Caco-2 (cell line): ENCODE measurements at regions of chr5 and their contacts with region 1.

Region 1: DNA sequence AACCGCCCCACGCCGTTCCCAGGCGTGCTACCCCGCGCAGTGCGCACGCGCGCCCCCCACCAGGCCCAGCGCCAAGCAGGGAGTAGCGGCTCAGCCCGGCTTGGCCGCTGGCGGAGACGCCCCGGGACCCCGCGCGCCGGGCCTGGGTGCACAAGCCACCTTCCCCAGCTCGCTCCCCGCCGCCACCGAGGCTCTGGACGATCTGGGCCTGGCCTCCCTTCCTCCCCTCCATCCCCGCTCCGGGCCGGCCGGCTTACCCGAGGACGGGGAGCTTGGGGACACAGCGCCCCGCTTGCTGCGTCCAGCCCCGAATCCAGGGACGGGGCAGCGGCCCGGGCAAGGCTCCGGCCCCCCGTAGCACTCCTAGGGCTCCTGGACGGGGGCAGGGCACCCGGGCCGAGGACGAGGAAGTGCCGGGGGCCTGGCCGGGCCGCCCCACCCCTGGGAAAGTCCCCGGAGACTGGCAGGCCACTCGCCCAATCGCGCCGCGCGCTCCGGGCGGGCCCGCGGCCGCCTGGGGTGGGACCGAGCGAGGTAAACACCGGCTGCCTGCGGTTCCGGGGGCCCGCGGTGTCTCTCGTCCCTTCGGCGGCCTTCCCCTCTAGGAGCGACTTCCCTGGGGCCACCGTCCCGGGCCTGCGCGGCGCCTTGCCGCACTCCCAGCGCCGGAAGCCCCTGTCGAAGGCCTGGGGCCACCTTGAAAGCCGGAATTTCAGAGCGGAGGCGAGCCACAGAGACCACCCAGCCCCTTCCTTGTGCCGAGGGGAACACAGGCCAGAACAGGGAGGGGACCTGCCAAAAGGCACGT is at the start of gene TNIP1:
- DNase-seq: peak; percentile 93 to 97
- H3K4me3 ChIP-seq: peak within 1 kb of the TSS; percentile 62
- H3K4me3 Mint-ChIP-seq: peak within 1 kb of the TSS; percentile 74
- H3K27ac Mint-ChIP-seq: peak within 1 kb of the TSS; percentile 70
- H3K4me1 ChIP-seq: peaks cover 14% of the 10 kb centered on the region
- H3K4me1 Mint-ChIP-seq: peaks cover 41% of the 10 kb centered on the region
- H3K27me3 ChIP-seq: no peaks in the 10 kb centered on the region
- H3K27me3 Mint-ChIP-seq: no peaks in the 10 kb centered on the region
- CTCF ChIP-seq: no peak
- total RNA-seq, gene TNIP1: 62.7 and 65.7 TPM in 2 replicates

Region 2: DNA sequence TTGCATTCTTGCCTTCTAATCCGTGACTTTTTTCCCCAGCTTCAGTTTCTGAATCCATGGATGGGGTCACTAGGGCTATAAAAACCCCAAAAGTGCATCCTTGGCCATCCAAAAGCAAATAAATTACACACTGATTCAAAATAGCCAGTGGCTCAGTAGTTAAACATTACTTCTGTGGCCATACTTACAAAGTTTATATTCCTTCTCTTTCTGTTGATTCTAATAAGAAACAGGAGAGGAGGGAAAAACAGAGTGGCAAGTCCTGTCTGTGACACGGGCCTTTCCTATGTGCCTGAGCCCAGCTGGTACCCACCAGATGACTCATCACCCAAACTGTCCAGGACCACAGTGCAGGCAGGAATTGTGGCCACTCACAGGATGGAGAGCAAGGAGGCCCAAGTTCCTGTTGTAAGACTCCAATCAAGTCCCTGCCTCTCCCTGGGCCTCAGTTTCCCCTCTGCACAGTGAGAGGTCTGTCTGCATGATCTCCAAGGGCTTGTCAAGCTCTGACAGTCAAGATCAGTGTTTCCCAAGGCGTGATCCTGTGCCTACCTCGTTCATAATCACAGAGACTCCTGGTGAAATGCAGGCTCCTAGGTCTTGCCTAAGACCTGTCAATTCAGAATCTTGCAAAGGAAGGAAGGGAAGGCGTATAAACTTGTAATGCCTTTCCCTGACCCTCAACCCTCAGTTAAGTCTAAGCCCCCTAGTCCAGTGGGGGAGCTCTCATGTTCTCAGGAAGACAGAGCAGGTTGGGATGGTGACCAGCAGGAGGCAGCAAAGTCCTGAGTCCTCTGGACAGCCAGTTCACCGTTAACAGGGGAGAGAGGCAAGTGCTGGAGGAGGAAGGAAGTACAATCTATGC is 29.5 kb before region 1 on chr5:
- CTCF ChIA-PET with region 1: interaction called, 5 read pairs
- POLR2A ChIA-PET with region 1: interaction called, 3 read pairs
- intact Hi-C with region 1: loop called (anchors 2 kb)
- DNase-seq: peak; percentile 72 to 78
- H3K4me3 ChIP-seq: no peak overlapping the region
- H3K4me3 Mint-ChIP-seq: no peak overlapping the region
- H3K27ac Mint-ChIP-seq: peak overlapping the region; percentile 53
- H3K4me1 ChIP-seq: peaks cover 6% of the 10 kb centered on the region; the same call in 1 of the 2 replicates
- H3K4me1 Mint-ChIP-seq: peaks cover 10% of the 10 kb centered on the region
- H3K27me3 ChIP-seq: no peaks in the 10 kb centered on the region
- H3K27me3 Mint-ChIP-seq: no peaks in the 10 kb centered on the region
- CTCF ChIP-seq: peak; percentile 81 to 89

Region 3: GRCh38 chr5:151095341-151096000 is 14.6 kb after region 1 on chr5:
- CTCF ChIA-PET with region 1: no interaction called
- POLR2A ChIA-PET with region 1: no interaction called
- intact Hi-C with region 1: loop called (anchors 1 kb)
- DNase-seq: peak; percentile 56 to 81
- H3K4me3 ChIP-seq: no peak overlapping the region
- H3K4me3 Mint-ChIP-seq: no peak overlapping the region
- H3K27ac Mint-ChIP-seq: peak overlapping the region; percentile 66
- H3K4me1 ChIP-seq: peaks cover 42% of the 10 kb centered on the region
- H3K4me1 Mint-ChIP-seq: peaks cover 35% of the 10 kb centered on the region
- H3K27me3 ChIP-seq: no peaks in the 10 kb centered on the region
- H3K27me3 Mint-ChIP-seq: no peaks in the 10 kb centered on the region
- CTCF ChIP-seq: no peak

Region 4: GRCh38 chr5:151115274-151115905 is 34.6 kb after region 1 on chr5:
- CTCF ChIA-PET with region 1: interaction called, 6 read pairs
- POLR2A ChIA-PET with region 1: no interaction called
- intact Hi-C with region 1: loop called (anchors 2 kb)
- DNase-seq: peak; percentile 74 to 83
- H3K4me3 ChIP-seq: no peak overlapping the region
- H3K4me3 Mint-ChIP-seq: no peak overlapping the region
- H3K27ac Mint-ChIP-seq: no peak overlapping the region
- H3K4me1 ChIP-seq: no peaks in the 10 kb centered on the region
- H3K4me1 Mint-ChIP-seq: peaks cover 7% of the 10 kb centered on the region
- H3K27me3 ChIP-seq: no peaks in the 10 kb centered on the region
- H3K27me3 Mint-ChIP-seq: no peaks in the 10 kb centered on the region
- CTCF ChIP-seq: peak; percentile 93 to 94